ENCODE measurements at regions of chr20 and their contacts with region 1.

Region 1: GRCh38 chr20:47540443-47541354 is 39.0 kb downstream of the NCOA3 start:
- DNase-seq: no peak
- ATAC-seq: no peak
- H3K4me3 Mint-ChIP-seq: no peak overlapping the region
- H3K27ac Mint-ChIP-seq: peak overlapping the region; percentile 3
- H3K4me1 Mint-ChIP-seq: peaks cover 55% of the 10 kb centered on the region
- H3K27me3 Mint-ChIP-seq: no peaks in the 10 kb centered on the region

Region 2: GRCh38 chr20:47527004-47527757 is 13.5 kb before region 1 on chr20:
- CTCF ChIA-PET with region 1: interaction called, 12 read pairs
- POLR2A ChIA-PET with region 1: no interaction called
- DNase-seq: no peak
- ATAC-seq: no peak
- H3K4me3 Mint-ChIP-seq: no peak overlapping the region
- H3K27ac Mint-ChIP-seq: no peak overlapping the region
- H3K4me1 Mint-ChIP-seq: peaks cover 22% of the 10 kb centered on the region
- H3K27me3 Mint-ChIP-seq: no peaks in the 10 kb centered on the region

Region 3: GRCh38 chr20:47568001-47568407 is 27.3 kb after region 1 on chr20:
- CTCF ChIA-PET with region 1: no interaction called
- POLR2A ChIA-PET with region 1: no interaction called
- DNase-seq: no peak
- ATAC-seq: no peak
- H3K4me3 Mint-ChIP-seq: no peak overlapping the region
- H3K27ac Mint-ChIP-seq: peak overlapping the region; percentile 21
- H3K4me1 Mint-ChIP-seq: peaks cover 53% of the 10 kb centered on the region
- H3K27me3 Mint-ChIP-seq: no peaks in the 10 kb centered on the region

Measured in activated CD8-positive, alpha-beta T cell treated with anti-CD3 and anti-CD28 coated beads, Interleukin-2, amount 10 ng/mL, durations not matched to agents 7 days and 5 days (primary cell).